CD14-positive monocyte (primary cell): ENCODE measurements at regions of chr5 and their contacts with region 1.

Region 1: DNA sequence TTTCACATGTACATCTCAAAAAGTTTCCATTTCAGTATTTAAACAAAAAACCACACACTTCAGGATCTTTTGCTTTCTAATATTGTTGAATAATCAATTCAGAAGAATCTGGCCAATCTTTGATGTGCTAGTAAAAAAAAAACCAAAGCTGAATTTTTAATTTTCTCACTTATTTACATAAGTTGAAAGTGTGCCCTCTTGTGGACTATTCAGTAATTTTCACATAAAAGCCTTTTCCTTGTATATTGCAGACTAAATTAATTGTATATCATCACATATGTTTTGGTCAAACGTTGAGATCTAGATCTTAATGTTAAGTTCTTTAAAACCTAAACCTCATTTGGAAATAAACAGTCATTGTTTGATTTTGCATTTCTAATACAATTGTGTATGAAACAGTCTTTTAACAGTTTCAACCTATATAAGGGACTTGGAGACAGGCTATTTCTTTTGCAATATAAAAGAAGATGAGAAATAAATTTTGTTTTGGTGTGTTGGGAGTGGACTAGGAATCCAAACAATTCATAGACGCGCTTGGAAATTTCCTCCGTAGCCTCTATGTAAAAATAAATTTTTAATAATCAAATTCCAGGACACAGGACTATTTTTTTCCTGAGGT is 68.1 kb downstream of the NIPBL start:
- DNase-seq: peak; percentile 32 to 59 (median 44)
- H3K4me3 ChIP-seq: no peak overlapping the region
- H3K4me3 Mint-ChIP-seq: no peak overlapping the region
- H3K27ac ChIP-seq: no peak overlapping the region
- H3K27ac Mint-ChIP-seq: no peak overlapping the region
- H3K4me1 ChIP-seq: peaks cover 2 to 5% of the 10 kb centered on the region in 2 donors
- H3K4me1 Mint-ChIP-seq: peaks cover 10% of the 10 kb centered on the region
- H3K27me3 ChIP-seq: no peaks in the 10 kb centered on the region
- H3K27me3 Mint-ChIP-seq: no peaks in the 10 kb centered on the region
- CTCF ChIP-seq: peak; percentile 76

Region 2: GRCh38 chr5:36875790-36876388 is 68.8 kb before region 1 on chr5:
- intact Hi-C with region 1: loop called (anchors 5 to 10 kb)
- DNase-seq: peak; percentile 71 to 76 (median 72)
- H3K4me3 ChIP-seq: peak overlapping the region; percentile 87 to 98 (median 97)
- H3K4me3 Mint-ChIP-seq: peak overlapping the region; percentile 98 to 99
- H3K27ac ChIP-seq: peak overlapping the region; percentile 94 to 100
- H3K27ac Mint-ChIP-seq: peak overlapping the region; percentile 96 to 98 (median 98)
- H3K4me1 ChIP-seq: peaks cover 24 to 55% of the 10 kb centered on the region in 2 donors
- H3K4me1 Mint-ChIP-seq: peaks cover 47% of the 10 kb centered on the region
- H3K27me3 ChIP-seq: no peaks in the 10 kb centered on the region
- H3K27me3 Mint-ChIP-seq: no peaks in the 10 kb centered on the region
- CTCF ChIP-seq: peak; percentile 58

Region 3: DNA sequence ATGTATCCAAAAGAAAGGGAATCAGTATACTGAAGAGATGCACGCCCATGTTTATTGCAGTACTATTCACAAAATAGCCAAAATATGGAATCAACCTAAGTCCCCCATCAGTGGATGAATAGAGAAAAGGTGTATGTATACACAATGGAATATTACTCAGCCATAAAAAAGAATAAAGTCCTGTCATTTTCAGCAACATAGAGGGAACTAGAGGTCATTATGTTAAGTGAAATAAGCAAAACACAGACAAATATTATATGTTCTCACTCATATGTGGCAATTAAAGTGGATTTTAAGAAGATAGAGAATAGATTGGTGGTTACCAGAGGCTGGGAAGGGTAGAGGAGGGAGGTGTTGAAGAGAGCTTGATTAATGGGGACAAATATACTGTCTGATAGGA is 20.5 kb after region 1 on chr5:
- intact Hi-C with region 1: no loop called
- DNase-seq: no peak
- H3K4me3 ChIP-seq: no peak overlapping the region
- H3K4me3 Mint-ChIP-seq: no peak overlapping the region
- H3K27ac ChIP-seq: no peak overlapping the region
- H3K27ac Mint-ChIP-seq: no peak overlapping the region
- H3K4me1 ChIP-seq: no peaks in the 10 kb centered on the region
- H3K4me1 Mint-ChIP-seq: no peaks in the 10 kb centered on the region
- H3K27me3 ChIP-seq: no peaks in the 10 kb centered on the region
- H3K27me3 Mint-ChIP-seq: no peaks in the 10 kb centered on the region
- CTCF ChIP-seq: no peak